H1 (cell line): ENCODE measurements at regions of chr9 and their contacts with region 1.

Region 1: GRCh38 chr9:128136816-128137793 is 9.6 kb upstream of the PTGES2 start:
- DNase-seq: no peak
- H3K4me3 ChIP-seq: no peak overlapping the region
- H3K27ac ChIP-seq: no peak overlapping the region
- H3K4me1 ChIP-seq: no peaks in the 10 kb centered on the region
- H3K27me3 ChIP-seq: no peaks in the 10 kb centered on the region
- CTCF ChIP-seq: no peak
- EP300 ChIP-seq: no peak
- POLR2A ChIP-seq: no peak
- RAD21 ChIP-seq: no peak

Region 2: DNA sequence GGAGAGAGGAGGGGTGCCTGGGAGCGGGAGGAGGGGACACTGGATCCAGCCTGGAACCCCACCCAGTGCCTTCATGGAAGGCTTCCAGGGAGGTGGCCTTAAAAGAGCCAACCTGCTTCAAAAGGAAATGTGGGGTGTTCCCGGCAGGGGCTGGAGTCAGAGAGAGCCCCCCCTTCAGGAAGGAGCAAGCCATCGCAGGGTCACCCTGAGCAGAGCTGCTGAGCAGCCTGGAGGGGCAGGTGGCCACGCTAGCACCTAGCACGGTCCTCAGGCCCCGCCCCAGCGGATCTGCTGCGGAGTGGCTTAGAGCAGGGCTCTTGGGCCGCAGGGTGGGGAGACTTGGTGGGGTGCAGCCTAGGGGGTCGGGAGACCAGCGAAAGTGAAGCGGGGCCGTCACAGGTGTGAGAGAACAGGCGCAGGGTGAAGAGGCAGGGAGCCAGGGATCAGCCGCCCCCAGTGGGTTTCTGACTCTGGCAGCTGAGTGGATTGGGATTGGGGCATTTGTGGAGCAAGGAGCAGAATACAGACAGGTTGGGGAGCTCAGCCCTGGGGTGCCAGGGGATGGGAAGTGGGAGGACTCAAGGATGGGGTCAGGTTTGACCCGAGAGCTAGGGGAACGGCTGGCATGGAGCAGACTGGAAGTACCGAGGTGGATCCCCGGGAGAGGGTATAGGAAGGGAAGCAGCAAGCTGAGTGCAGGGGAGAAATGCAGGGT is 13.6 kb after region 1 on chr9:
- CTCF ChIA-PET with region 1: interaction called, 74 read pairs
- POLR2A ChIA-PET with region 1: interaction called, 6 read pairs
- DNase-seq: peak in 1 of 2 experiments; percentile 86
- H3K4me3 ChIP-seq: peak overlapping the region in 1 of 4 experiments; percentile 10; a peak in 1 of 8 replicates
- H3K27ac ChIP-seq: no peak overlapping the region
- H3K4me1 ChIP-seq: peaks cover 0 to 8% (median 3%) of the 10 kb centered on the region in 4 experiments; a peak in 5 of 7 replicates
- H3K27me3 ChIP-seq: no peaks in the 10 kb centered on the region; a peak in 2 of 7 replicates
- CTCF ChIP-seq: peak in 2 of 3 experiments; percentile 83 to 87; a peak in 3 of 4 replicates
- EP300 ChIP-seq: no peak
- POLR2A ChIP-seq: no peak
- RAD21 ChIP-seq: peak; percentile 21 to 41; a peak in 2 of 4 replicates

Region 3: DNA sequence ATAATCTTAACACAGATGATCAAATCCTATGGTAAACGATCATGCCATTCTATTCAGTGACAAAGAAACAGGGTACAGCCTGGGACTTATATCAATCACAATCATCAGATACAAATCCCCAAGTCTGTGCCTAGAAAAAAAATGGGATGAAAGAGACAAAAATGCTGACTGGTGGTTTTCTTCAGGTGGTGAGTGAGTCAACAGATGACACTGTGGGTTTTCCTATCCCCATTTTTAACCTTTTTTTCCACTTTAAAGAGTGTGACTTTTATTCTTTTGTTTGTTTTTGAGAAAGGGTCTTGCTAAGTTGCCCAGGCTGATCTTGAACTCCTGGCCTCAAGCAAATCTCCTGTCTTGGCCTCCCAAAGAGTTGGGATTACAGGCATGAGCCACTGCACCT is 51.1 kb after region 1 on chr9:
- CTCF ChIA-PET with region 1: no interaction called
- POLR2A ChIA-PET with region 1: no interaction called
- DNase-seq: no peak
- H3K4me3 ChIP-seq: no peak overlapping the region
- H3K27ac ChIP-seq: no peak overlapping the region
- H3K4me1 ChIP-seq: peaks cover 0 to 11% (median 4%) of the 10 kb centered on the region in 4 experiments; a peak in 4 of 7 replicates
- H3K27me3 ChIP-seq: no peaks in the 10 kb centered on the region
- CTCF ChIP-seq: no peak
- EP300 ChIP-seq: no peak
- POLR2A ChIP-seq: no peak
- RAD21 ChIP-seq: no peak

Region 4: GRCh38 chr9:128333451-128333869 is 196.4 kb after region 1 on chr9:
- CTCF ChIA-PET with region 1: no interaction called
- POLR2A ChIA-PET with region 1: no interaction called
- DNase-seq: no peak
- H3K4me3 ChIP-seq: no peak overlapping the region
- H3K27ac ChIP-seq: no peak overlapping the region
- H3K4me1 ChIP-seq: no peaks in the 10 kb centered on the region
- H3K27me3 ChIP-seq: no peaks in the 10 kb centered on the region; a peak in 1 of 7 replicates
- CTCF ChIP-seq: no peak
- EP300 ChIP-seq: no peak
- POLR2A ChIP-seq: no peak
- RAD21 ChIP-seq: no peak